ENCODE measurements at regions of chr5 and their contacts with region 1.

Region 1: DNA sequence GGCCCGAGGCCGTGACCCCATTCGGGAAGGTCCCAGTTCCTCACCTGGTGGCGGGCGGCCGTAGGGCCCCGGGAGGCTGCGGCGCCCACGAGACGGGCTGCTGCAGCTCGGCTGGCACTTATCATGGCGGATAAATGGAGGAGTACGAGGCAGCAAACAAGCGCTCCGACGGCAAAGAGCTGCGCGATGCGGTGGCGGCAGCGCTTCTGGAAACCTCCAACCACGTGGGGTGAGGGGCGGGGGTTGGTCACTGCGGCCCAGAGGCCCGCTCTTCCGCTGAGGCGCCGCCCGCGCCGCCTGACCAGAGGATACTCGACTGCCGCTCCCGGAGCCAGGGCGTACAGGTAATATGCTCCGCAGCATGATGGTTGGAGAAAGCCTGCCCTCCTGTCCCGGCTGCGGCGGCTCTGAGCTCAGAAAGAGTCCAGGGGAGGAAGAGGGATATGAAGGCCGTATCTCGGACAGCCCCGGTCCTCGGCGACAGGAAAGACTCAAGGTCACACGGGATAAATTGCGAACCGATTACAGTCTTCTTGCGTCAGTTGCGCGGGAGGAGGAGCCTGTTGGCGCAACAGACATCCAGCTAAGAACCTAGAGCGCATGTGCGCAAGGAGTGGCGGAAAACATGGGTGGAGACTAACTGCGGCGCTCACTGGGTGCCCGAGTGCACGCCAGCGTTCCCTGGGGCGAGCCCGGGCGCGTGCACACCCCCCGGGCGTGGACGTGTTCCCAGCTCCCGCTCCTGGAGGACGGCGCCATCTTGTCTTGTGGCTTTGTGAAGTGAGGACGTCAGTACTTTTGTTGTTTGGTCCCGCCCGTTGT is at the start of gene HSPA9:
- DNase-seq: peak; percentile 98 to 99
- H3K4me3 ChIP-seq: peak within 1 kb of the TSS; percentile 93
- H3K4me3 Mint-ChIP-seq: peak within 1 kb of the TSS; percentile 99
- H3K27ac Mint-ChIP-seq: peak within 1 kb of the TSS; percentile 99
- H3K4me1 ChIP-seq: peaks cover 11% of the 10 kb centered on the region
- H3K4me1 Mint-ChIP-seq: peaks cover 6% of the 10 kb centered on the region
- H3K27me3 ChIP-seq: no peaks in the 10 kb centered on the region
- H3K27me3 Mint-ChIP-seq: no peaks in the 10 kb centered on the region
- CTCF ChIP-seq: peak in 1 of 2 experiments; percentile 12
- total RNA-seq, gene HSPA9: 533 and 537 TPM in 2 replicates

Region 2: GRCh38 chr5:138435943-138436342 is 139.5 kb before region 1 on chr5:
- CTCF ChIA-PET with region 1: no interaction called
- POLR2A ChIA-PET with region 1: no interaction called
- intact Hi-C with region 1: no loop called
- DNase-seq: no peak
- H3K4me3 ChIP-seq: no peak overlapping the region
- H3K4me3 Mint-ChIP-seq: no peak overlapping the region
- H3K27ac Mint-ChIP-seq: no peak overlapping the region
- H3K4me1 ChIP-seq: peaks cover 4% of the 10 kb centered on the region; the same call in 1 of the 2 replicates
- H3K4me1 Mint-ChIP-seq: no peaks in the 10 kb centered on the region
- H3K27me3 ChIP-seq: no peaks in the 10 kb centered on the region
- H3K27me3 Mint-ChIP-seq: no peaks in the 10 kb centered on the region
- CTCF ChIP-seq: no peak

Region 3: DNA sequence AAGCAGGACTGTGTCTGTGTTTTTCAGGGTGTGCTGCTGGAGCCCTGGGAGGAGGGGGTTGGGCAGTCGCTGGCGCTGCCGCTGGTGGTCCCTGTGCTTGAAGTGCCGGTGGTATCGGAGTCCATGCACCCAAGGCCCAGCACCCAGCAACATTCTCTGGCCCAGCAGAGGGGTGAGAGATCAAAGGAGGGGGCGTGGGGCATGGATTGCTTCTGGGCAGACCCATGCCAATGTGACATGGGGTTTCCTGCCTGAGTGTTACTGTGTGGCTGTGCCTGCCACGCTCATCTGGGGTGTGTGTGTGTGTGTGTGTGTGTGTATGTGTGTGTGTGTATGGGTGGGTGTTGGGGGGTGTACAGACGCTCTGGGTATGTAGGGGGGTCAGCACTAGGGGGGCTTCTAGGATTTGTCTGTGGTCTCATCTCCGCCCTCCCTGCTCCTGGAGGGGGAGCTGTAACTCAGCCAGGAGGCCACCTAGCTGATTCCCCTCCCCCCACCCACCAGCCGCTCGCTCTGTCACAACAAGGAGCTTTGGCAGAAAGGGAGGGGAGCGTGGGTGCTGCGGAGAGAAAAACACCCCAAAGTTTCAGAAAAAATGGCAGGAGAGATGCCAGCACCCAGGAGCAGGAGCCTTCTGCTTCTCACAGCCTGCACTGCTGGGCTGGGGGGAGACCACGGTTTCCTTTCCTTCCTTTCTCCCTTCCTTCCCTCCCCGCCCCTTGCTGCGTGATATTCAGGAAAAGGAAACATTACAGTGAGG is 35.7 kb after region 1 on chr5:
- CTCF ChIA-PET with region 1: interaction called, 8 read pairs
- POLR2A ChIA-PET with region 1: no interaction called
- intact Hi-C with region 1: loop called (anchors 2 kb)
- DNase-seq: no peak
- H3K4me3 ChIP-seq: no peak overlapping the region
- H3K4me3 Mint-ChIP-seq: no peak overlapping the region
- H3K27ac Mint-ChIP-seq: no peak overlapping the region
- H3K4me1 ChIP-seq: peaks cover 10% of the 10 kb centered on the region; the same call in 1 of the 2 replicates
- H3K4me1 Mint-ChIP-seq: no peaks in the 10 kb centered on the region
- H3K27me3 ChIP-seq: no peaks in the 10 kb centered on the region
- H3K27me3 Mint-ChIP-seq: no peaks in the 10 kb centered on the region
- CTCF ChIP-seq: no peak

Region 4: GRCh38 chr5:138632900-138633489 is 57.6 kb after region 1 on chr5:
- CTCF ChIA-PET with region 1: no interaction called
- POLR2A ChIA-PET with region 1: interaction called, 3 read pairs
- intact Hi-C with region 1: loop called (anchors 5 kb)
- DNase-seq: peak; percentile 56 to 76
- H3K4me3 ChIP-seq: no peak overlapping the region
- H3K4me3 Mint-ChIP-seq: no peak overlapping the region
- H3K27ac Mint-ChIP-seq: no peak overlapping the region
- H3K4me1 ChIP-seq: peaks cover 6% of the 10 kb centered on the region; the same call in 1 of the 2 replicates
- H3K4me1 Mint-ChIP-seq: peaks cover 7% of the 10 kb centered on the region
- H3K27me3 ChIP-seq: no peaks in the 10 kb centered on the region
- H3K27me3 Mint-ChIP-seq: no peaks in the 10 kb centered on the region
- CTCF ChIP-seq: peak; percentile 10 to 30

Region 5: DNA sequence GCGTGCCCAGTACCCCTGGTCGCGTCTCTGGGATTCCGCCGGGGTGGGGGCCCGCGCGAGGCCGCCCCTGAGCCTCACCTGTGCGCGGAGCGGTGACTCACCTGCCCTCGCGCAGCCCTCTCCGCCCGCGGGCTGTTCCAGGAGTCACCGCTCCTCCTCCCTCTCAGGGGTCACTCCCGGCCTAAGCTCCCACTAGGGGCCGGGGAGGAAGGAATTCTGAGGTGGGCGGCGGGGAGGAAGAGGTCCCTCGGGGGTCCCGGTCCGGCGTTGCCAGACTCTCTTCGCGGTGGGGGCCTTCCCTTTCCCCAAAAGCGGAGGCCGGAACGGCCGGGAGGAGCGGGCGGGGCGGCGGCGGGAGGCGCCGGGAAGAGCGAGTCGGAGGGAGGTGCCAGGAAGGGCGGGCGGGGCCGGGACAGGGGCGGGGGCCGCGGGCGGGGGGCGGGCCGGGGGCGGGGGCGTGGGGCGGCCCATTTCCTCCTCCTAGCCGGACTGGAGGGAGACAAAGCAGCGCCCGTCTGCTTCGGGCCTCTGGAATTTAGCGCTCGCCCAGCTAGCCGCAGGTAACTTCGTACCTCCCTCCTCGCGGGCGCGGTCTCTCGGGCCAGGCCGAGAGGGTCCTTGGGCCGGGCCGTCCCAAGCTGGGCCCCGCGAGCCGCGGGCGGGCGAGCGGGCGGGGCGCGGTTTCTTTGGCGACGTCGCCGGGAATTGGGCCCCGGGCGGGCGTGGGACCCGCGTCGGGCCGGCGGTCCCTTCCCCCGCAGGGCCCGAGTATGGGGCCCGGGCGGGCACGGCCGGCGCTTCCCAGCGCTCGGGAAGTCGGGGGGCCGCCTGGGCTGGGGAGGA is 177.8 kb after region 1 on chr5 and contains the start of gene CTNNA1:
- CTCF ChIA-PET with region 1: interaction called, 7 read pairs
- POLR2A ChIA-PET with region 1: no interaction called
- intact Hi-C with region 1: loop called (anchors 10 kb)
- DNase-seq: peak; percentile 91 to 94
- H3K4me3 ChIP-seq: peak within 1 kb of the TSS; percentile 86
- H3K4me3 Mint-ChIP-seq: peak within 1 kb of the TSS; percentile 93
- H3K27ac Mint-ChIP-seq: peak within 1 kb of the TSS; percentile 97
- H3K4me1 ChIP-seq: peaks cover 18% of the 10 kb centered on the region
- H3K4me1 Mint-ChIP-seq: peaks cover 52% of the 10 kb centered on the region
- H3K27me3 ChIP-seq: no peaks in the 10 kb centered on the region
- H3K27me3 Mint-ChIP-seq: no peaks in the 10 kb centered on the region
- CTCF ChIP-seq: no peak
- total RNA-seq, gene CTNNA1: 392 and 403 TPM in 2 replicates

Region 6: DNA sequence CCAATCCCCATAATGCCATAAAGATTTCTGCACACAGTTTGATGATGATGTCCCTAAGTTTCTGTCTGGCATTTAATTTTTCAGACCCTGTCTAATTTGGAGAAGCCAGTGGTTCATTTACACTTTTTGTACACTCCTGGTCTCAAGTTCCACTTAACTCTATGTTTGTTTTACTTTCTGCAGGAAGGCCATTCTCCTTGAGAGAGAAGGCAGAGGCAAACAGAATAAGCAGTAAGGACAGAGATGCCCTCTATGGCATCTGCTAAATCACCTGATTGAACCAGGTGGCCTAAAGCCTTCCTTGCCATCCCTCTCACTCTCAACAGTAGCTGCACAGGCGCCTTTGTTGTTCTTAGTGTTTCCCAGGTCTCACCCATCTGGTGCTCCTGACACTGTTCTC is 385.8 kb after region 1 on chr5:
- CTCF ChIA-PET with region 1: no interaction called
- POLR2A ChIA-PET with region 1: interaction called, 11 read pairs
- intact Hi-C with region 1: no loop called
- DNase-seq: no peak
- H3K4me3 ChIP-seq: no peak overlapping the region
- H3K4me3 Mint-ChIP-seq: no peak overlapping the region
- H3K27ac Mint-ChIP-seq: no peak overlapping the region
- H3K4me1 ChIP-seq: peaks cover 18% of the 10 kb centered on the region
- H3K4me1 Mint-ChIP-seq: peaks cover 17% of the 10 kb centered on the region
- H3K27me3 ChIP-seq: no peaks in the 10 kb centered on the region
- H3K27me3 Mint-ChIP-seq: no peaks in the 10 kb centered on the region
- CTCF ChIP-seq: no peak